Naive thymus-derived CD4-positive, alpha-beta T cell (primary cell): ENCODE measurements at regions of chr19 and their contacts with region 1.

Region 1: GRCh38 chr19:6110360-6110977 is at the start of gene RFX2:
- DNase-seq: peak; percentile 97 to 100 (median 99)
- ATAC-seq: peak; percentile 99
- H3K4me3 ChIP-seq: peak within 1 kb of the TSS; percentile 60
- H3K4me3 Mint-ChIP-seq: peak within 1 kb of the TSS; percentile 84 to 98 (median 92)
- H3K27ac ChIP-seq: peak within 1 kb of the TSS; percentile 64
- H3K27ac Mint-ChIP-seq: peak within 1 kb of the TSS; percentile 71 to 92 (median 88)
- H3K4me1 ChIP-seq: peaks cover 8 to 10% of the 10 kb centered on the region in 2 donors
- H3K4me1 Mint-ChIP-seq: peaks cover 21 to 27% (median 25%) of the 10 kb centered on the region in 7 donors
- H3K27me3 ChIP-seq: peaks cover 0 to 4% of the 10 kb centered on the region in 2 donors
- H3K27me3 Mint-ChIP-seq: peaks cover 0 to 19% (median 4%) of the 10 kb centered on the region in 5 donors
- total RNA-seq, gene RFX2: 4.0 to 18.4 (median 8.4) TPM

Region 2: GRCh38 chr19:5622463-5623396 is 487.7 kb before region 1 on chr19 and contains the starts of genes SAFB and SAFB2:
- CTCF ChIA-PET with region 1: no interaction called
- POLR2A ChIA-PET with region 1: no interaction called
- intact Hi-C with region 1: loop called in 1 of 2 experiments (anchors 5 kb)
- DNase-seq: peak; percentile 96 to 100 (median 100)
- ATAC-seq: peak; percentile 91
- H3K4me3 ChIP-seq: peak within 1 kb of the TSS; percentile 91
- H3K4me3 Mint-ChIP-seq: peak within 1 kb of the TSS; percentile 97 to 100 (median 100)
- H3K27ac ChIP-seq: peak within 1 kb of the TSS; percentile 97
- H3K27ac Mint-ChIP-seq: peak within 1 kb of the TSS; percentile 99 to 100 (median 100)
- H3K4me1 ChIP-seq: peaks cover 54 to 66% of the 10 kb centered on the region in 2 donors
- H3K4me1 Mint-ChIP-seq: peaks cover 52 to 79% (median 70%) of the 10 kb centered on the region in 7 donors
- H3K27me3 ChIP-seq: no peaks in the 10 kb centered on the region
- H3K27me3 Mint-ChIP-seq: peaks cover 0 to 5% (median 0%) of the 10 kb centered on the region in 5 donors
- total RNA-seq, gene SAFB: 141 to 203 (median 174) TPM
- total RNA-seq, gene SAFB2: 112 to 250 (median 243) TPM

Region 3: DNA sequence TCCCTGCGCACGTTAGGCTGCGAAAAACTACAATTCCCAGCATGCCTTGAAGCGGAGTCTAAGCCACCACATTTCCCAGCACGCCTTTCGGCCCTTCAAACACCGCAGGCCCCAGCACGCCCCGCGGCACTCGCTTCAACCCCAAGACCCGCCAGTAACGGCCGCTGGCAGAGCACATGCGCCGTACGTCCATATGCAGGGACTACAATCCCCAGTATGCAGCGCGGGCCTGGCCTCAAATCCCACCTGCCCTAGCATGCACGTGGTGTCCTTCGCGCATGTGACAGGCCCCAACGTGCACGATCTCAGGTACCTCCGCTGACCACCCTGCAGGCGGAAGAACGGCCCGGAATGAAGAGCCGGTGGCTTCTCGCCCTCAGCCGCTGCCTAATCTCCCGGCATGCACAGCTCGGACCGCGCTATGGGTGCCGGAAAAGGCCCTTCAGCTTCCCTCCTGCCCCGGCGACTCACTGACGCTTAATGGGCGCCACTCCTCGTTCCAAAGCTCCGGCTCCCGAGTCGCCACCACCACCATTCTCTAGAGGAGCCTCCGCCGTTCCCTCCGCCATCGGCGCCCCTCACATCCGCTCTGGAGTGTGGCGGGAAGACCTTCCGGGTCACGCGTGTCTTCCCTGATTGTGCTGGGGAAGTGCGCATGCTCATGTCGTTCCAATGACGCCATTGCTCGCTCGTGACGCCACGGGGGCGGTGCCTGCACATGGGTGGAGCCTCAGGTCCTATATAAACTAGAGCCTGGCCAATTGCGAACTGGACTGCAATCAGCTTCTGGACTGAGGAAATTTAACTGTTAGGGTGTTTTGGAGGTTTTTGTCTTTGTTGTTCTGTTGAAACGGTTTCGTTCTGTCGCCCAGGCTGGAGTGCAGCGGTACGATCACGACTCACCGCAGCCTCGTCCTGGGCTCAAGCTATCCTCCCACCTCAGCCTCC is 319.6 kb before region 1 on chr19 and contains the start of gene DUS3L:
- CTCF ChIA-PET with region 1: no interaction called
- POLR2A ChIA-PET with region 1: no interaction called
- intact Hi-C with region 1: loop called in 1 of 2 experiments (anchors 1 kb)
- DNase-seq: peak; percentile 90 to 97 (median 94)
- ATAC-seq: peak; percentile 97
- H3K4me3 ChIP-seq: peak within 1 kb of the TSS; percentile 95
- H3K4me3 Mint-ChIP-seq: peak within 1 kb of the TSS; percentile 94 to 100 (median 100)
- H3K27ac ChIP-seq: peak within 1 kb of the TSS; percentile 91
- H3K27ac Mint-ChIP-seq: peak within 1 kb of the TSS; percentile 99 to 100 (median 100)
- H3K4me1 ChIP-seq: peaks cover 8 to 12% of the 10 kb centered on the region in 2 donors
- H3K4me1 Mint-ChIP-seq: peaks cover 6 to 22% (median 15%) of the 10 kb centered on the region in 7 donors
- H3K27me3 ChIP-seq: no peaks in the 10 kb centered on the region
- H3K27me3 Mint-ChIP-seq: no peaks in the 10 kb centered on the region
- total RNA-seq, gene DUS3L: 53.2 to 179 (median 82.7) TPM

Region 4: DNA sequence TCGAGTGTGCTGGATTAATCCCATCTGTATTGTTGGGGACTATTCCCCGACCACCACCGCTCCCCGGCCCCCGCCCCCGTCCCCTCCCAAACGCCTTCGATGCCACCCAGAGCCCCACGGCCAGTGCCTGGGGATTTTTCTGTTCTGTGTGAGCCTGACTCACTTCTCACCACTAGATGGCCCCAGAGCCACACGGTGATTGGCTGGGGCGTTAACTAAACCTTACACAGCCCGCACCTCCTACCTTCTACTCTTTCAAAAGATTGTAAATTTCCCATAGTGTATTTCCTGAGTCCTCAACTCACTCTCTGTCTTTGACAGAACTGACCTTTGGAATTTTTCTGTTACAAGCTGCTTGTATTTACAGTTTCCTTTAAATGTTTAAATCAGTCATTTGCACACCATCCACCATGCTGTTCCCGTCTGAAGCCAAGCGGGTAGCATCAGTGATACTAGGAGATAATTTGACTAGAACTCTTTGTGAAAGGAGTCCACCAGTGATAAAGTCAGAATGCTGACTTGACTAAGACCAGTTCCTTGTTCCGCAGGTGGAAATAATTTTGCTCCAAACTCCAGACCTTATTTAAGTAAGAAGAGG is 61.6 kb before region 1 on chr19:
- CTCF ChIA-PET with region 1: interaction called, 4 read pairs
- POLR2A ChIA-PET with region 1: no interaction called
- intact Hi-C with region 1: loop called in 1 of 2 experiments (anchors 5 kb)
- DNase-seq: peak; percentile 56 to 81 (median 74)
- ATAC-seq: peak; percentile 100
- H3K4me3 ChIP-seq: no peak overlapping the region
- H3K4me3 Mint-ChIP-seq: no peak overlapping the region
- H3K27ac ChIP-seq: no peak overlapping the region
- H3K27ac Mint-ChIP-seq: no peak overlapping the region
- H3K4me1 ChIP-seq: no peaks in the 10 kb centered on the region
- H3K4me1 Mint-ChIP-seq: peaks cover 0 to 5% (median 4%) of the 10 kb centered on the region in 7 donors
- H3K27me3 ChIP-seq: no peaks in the 10 kb centered on the region
- H3K27me3 Mint-ChIP-seq: peaks cover 0 to 11% (median 0%) of the 10 kb centered on the region in 5 donors

Region 5: DNA sequence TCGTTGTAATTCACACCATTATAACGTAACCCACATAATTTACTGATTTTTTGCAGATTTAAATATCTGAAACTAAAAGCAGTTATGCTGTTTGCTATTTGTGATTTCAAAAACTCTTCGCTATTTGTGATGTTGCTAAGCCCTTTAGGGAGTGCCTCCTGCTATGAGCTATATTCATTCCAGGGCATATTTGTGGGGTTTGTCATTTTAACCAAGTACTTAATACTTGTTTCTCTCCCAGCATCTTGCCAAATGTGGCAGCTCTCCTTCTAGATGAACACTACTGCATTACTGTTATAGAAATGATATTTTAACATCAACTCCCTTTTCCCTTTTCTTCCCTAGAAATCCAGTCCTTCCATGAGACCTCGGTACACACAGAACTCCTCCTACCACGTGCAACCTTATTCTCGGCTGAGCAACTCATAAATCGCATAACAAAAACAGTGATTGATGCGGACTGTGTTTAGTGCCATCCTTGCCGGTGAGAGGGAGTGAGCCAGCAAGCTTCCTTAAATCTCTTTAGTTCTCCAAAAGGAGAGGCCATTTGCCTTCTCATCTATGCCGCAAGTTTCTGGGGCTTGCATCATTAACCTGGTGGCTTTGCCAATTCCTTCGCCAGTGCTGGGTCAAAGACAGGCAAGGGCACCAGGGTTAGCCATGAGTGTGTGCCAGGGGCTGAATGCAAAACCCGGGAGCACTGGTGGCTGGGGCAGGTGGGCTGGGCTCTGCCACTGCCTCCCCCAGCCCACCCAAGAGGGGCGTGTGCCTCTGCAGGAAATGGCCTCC is 33.6 kb before region 1 on chr19:
- CTCF ChIA-PET with region 1: no interaction called
- POLR2A ChIA-PET with region 1: no interaction called
- intact Hi-C with region 1: no loop called
- DNase-seq: no peak
- ATAC-seq: peak; percentile 58
- H3K4me3 ChIP-seq: no peak overlapping the region
- H3K4me3 Mint-ChIP-seq: no peak overlapping the region
- H3K27ac ChIP-seq: no peak overlapping the region
- H3K27ac Mint-ChIP-seq: no peak overlapping the region
- H3K4me1 ChIP-seq: no peaks in the 10 kb centered on the region
- H3K4me1 Mint-ChIP-seq: peaks cover 0 to 11% (median 0%) of the 10 kb centered on the region in 7 donors
- H3K27me3 ChIP-seq: no peaks in the 10 kb centered on the region
- H3K27me3 Mint-ChIP-seq: no peaks in the 10 kb centered on the region

Region 6: GRCh38 chr19:6100284-6100915 is 10.1 kb before region 1 on chr19:
- CTCF ChIA-PET with region 1: no interaction called
- POLR2A ChIA-PET with region 1: interaction called, 12 read pairs
- intact Hi-C with region 1: loop called in 1 of 2 experiments (anchors 1 kb)
- DNase-seq: peak in 8 of 9 donors; percentile 17 to 47 (median 32)
- ATAC-seq: peak; percentile 74
- H3K4me3 ChIP-seq: peak overlapping the region; percentile 48
- H3K4me3 Mint-ChIP-seq: peak overlapping the region; percentile 66 to 89 (median 80)
- H3K27ac ChIP-seq: no peak overlapping the region
- H3K27ac Mint-ChIP-seq: peak overlapping the region; percentile 49 to 88 (median 77)
- H3K4me1 ChIP-seq: peaks cover 0 to 4% of the 10 kb centered on the region in 2 donors
- H3K4me1 Mint-ChIP-seq: peaks cover 9 to 32% (median 19%) of the 10 kb centered on the region in 7 donors
- H3K27me3 ChIP-seq: no peaks in the 10 kb centered on the region
- H3K27me3 Mint-ChIP-seq: no peaks in the 10 kb centered on the region

Region 7: DNA sequence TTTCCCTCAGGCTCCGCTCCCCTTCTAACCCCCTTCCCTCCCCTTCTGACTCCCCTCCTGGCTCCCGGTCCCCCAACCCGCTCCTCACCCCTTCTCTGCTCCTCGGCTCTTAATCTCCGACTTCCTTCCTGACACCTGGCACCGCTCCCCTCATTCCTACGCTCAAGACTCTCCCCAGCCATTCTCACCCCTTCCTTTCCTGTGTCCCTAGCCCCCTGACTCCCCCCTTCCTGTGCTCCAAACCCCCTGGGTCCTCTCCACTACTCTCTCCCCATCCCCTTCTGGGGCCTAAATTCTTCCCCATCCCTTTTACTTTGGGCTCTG is 251.5 kb after region 1 on chr19:
- CTCF ChIA-PET with region 1: no interaction called
- POLR2A ChIA-PET with region 1: no interaction called
- intact Hi-C with region 1: loop called in 1 of 2 experiments (anchors 1 kb)
- DNase-seq: no peak
- ATAC-seq: no peak
- H3K4me3 ChIP-seq: peak overlapping the region; percentile 76
- H3K4me3 Mint-ChIP-seq: peak overlapping the region; percentile 83 to 100 (median 97)
- H3K27ac ChIP-seq: peak overlapping the region; percentile 82
- H3K27ac Mint-ChIP-seq: peak overlapping the region; percentile 87 to 98 (median 96)
- H3K4me1 ChIP-seq: peaks cover 10 to 13% of the 10 kb centered on the region in 2 donors
- H3K4me1 Mint-ChIP-seq: peaks cover 10 to 37% (median 22%) of the 10 kb centered on the region in 7 donors
- H3K27me3 ChIP-seq: no peaks in the 10 kb centered on the region
- H3K27me3 Mint-ChIP-seq: no peaks in the 10 kb centered on the region